Heart left ventricle (tissue), 16 donors: ENCODE measurements at regions of chr15 and their contacts with region 1.

Region 1: DNA sequence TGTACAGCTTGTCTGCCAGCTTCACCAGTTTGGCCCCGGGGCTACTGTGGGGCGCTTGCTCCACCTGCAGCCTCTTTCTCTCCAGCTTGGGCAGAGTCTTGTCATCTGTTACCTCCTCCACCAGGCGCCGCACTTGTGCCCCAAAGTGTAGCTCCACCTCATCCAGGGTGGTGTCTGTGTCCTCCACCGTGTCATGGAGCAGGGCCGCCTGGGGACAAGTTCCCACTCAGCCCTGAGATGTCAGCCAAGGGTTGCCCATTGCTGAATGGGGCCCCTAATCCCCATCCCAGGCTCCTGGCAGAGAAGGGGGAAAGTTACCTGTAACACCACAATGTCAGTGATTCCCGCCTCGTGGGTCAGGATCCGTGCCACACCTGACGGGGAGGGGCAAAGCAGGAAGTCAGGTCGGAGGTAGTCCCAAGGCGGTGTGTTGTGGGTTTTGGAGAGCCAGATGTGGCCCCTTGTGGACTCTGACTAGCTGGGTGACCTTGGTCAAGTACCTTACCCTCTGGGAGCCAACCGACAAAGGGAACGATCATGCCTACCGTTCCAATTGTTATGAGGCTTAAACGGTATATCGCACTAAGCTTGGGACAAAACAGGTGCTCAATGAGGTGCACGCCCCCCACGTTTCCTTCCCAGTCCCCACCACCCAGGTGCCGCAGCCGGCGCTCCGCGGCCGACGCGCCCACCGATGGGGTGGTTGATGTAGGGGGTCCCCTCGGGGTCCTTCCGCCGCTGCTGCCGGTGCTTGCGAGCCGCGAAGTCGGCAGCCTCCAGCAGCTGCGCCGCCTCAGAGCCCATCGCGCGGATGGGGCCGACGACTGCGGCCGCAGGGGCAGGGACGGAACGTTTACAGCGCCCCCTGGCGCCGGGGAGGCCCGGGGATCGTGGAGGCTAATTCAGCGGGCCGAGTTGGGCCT is at the start of gene HDDC3:
- DNase-seq: peak; percentile 90 to 96 (median 93)
- ATAC-seq: peak; percentile 42 to 66 (median 65)
- H3K4me3 ChIP-seq: peak within 1 kb of the TSS; percentile 48 to 95 (median 86)
- H3K27ac ChIP-seq: peak within 1 kb of the TSS; percentile 89 to 97 (median 96)
- H3K4me1 ChIP-seq: peaks cover 11 to 67% (median 47%) of the 10 kb centered on the region in 12 donors
- H3K27me3 ChIP-seq: no peaks in the 10 kb centered on the region
- CTCF ChIP-seq: peak; percentile 94 to 99 (median 97)
- POLR2A ChIP-seq: peak in 1 of 2 donors; percentile 28
- total RNA-seq, gene HDDC3: 10.9 to 19.9 (median 15.2) TPM

Region 2: DNA sequence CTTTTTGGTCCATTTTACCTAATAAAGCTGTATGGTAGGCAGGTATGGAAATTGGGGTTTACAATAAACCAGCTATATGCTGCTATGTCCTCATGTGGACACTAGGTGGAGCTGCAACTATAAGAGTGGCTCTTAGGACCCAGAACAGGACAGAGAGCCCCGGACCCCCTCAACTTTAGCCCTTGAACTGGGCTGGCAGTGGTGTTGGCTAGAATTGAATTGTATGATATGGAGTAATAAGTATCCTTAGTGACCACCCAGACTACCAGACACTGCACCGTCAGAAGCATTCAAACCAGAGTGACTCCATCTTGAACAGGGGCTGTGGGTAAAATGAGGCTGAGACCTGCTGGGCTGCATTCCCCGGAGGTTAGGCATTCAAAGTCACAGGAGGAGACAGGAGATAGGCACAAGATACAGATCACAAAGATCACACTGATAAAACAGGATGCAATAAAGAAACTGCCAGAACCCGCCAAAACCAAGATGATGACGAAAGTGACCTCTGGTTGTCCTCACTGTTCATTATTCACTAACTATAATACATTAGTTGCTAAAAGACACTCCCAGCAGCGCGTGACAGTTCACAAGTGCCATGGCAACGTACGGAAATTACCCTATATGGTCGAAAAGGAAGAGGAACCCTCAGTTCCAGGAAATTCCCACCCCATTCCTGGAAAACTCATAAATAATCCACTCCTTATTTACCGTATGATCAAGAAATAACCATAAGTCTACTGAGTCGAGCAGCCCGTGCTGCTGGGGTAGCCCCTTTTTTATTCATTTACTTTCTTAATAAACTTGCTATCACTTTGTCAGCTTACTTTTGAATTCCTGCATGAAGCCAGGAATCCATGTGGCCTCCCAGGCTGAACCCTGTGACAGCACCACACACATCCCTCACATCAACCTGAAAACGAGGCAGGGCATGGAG is 283.6 kb before region 1 on chr15:
- intact Hi-C with region 1: loop called in 7 of 10 experiments (anchors 1 to 5 kb)
- DNase-seq: peak; percentile 61 to 79 (median 75)
- ATAC-seq: peak; percentile 66 to 89 (median 74)
- H3K4me3 ChIP-seq: peak overlapping the region in 1 of 12 donors; percentile 2
- H3K27ac ChIP-seq: peak overlapping the region; percentile 16 to 80 (median 58)
- H3K4me1 ChIP-seq: peaks cover 0 to 31% (median 15%) of the 10 kb centered on the region in 12 donors
- H3K27me3 ChIP-seq: no peaks in the 10 kb centered on the region
- CTCF ChIP-seq: peak; percentile 80 to 97 (median 93)
- POLR2A ChIP-seq: no peak

Region 3: DNA sequence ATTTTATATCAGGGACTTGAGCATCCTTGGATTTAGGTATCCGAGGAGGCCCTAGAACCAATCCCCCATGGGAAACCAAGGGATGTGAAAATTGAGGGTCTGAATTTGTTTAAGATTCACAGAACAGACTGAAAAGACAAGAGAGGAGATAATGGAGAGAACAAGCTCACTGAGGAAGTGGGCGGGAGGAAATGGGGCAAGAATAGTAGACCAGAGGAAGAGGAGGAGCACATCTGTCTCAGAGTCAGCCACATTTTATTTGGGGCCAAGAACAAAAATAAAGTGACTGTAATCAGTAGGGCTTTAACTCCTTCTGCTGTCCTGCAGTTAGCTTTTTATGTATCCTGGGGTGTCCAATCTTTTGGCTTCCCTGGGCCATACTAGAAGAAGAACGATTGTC is 151.1 kb before region 1 on chr15:
- intact Hi-C with region 1: no loop called
- DNase-seq: no peak
- ATAC-seq: peak in 1 of 4 donors; percentile 51
- H3K4me3 ChIP-seq: no peak overlapping the region
- H3K27ac ChIP-seq: peak overlapping the region in 1 of 12 donors; percentile 51
- H3K4me1 ChIP-seq: peaks cover 0 to 20% (median 0%) of the 10 kb centered on the region in 12 donors
- H3K27me3 ChIP-seq: no peaks in the 10 kb centered on the region
- CTCF ChIP-seq: no peak
- POLR2A ChIP-seq: no peak

Region 4: GRCh38 chr15:90829942-90830440 is 102.0 kb before region 1 on chr15:
- intact Hi-C with region 1: no loop called
- DNase-seq: peak in 2 of 5 donors; percentile 38 to 50
- ATAC-seq: peak; percentile 52 to 83 (median 68)
- H3K4me3 ChIP-seq: peak overlapping the region in 1 of 12 donors; percentile 26
- H3K27ac ChIP-seq: peak overlapping the region in 2 of 12 donors; percentile 18 to 92
- H3K4me1 ChIP-seq: peaks cover 0 to 25% (median 0%) of the 10 kb centered on the region in 12 donors
- H3K27me3 ChIP-seq: no peaks in the 10 kb centered on the region
- CTCF ChIP-seq: no peak
- POLR2A ChIP-seq: no peak

Region 5: DNA sequence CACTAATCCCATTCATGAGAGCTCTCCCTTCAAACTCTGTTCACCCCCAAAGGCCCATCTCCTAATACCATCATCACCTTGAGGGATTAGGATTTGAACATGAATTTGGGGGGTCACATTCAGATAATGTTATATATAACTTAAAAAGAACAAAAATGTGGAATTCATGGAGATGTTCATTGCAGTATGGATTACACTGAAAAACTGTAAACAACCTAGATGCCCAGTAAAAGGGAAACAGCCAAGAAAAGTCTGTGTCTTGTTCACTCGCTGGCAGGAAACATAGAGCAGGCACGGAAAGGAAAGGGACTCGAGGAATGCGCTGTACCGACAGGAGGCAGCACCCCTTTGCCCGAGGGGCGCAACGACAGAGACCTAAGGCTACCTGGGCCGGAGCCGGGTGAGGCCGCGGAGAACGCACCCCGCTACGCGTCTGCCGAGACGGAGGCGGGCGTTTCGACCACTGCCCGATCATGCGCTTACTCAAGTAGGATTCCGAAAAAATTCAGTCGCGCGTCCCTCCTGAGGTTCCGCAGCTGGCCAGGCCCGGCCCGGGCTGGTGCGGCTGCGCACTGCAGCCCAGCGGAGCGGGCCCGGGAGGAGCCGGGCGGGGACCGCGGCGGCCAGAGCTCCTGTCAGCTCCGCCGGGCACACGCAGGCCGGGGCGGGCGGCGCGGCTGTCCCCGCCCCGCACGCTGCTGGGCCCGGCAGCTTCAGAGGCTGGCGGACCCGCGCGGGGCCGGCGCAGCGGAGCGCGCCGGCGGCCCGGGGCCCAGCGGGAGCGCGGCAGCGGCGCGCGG is 29.8 kb before region 1 on chr15:
- intact Hi-C with region 1: loop called in 9 of 10 experiments (anchors 1 to 2 kb)
- DNase-seq: peak; percentile 77 to 89 (median 84)
- ATAC-seq: peak; percentile 68 to 92 (median 88)
- H3K4me3 ChIP-seq: peak overlapping the region; percentile 18 to 95 (median 84)
- H3K27ac ChIP-seq: peak overlapping the region; percentile 65 to 98 (median 94)
- H3K4me1 ChIP-seq: peaks cover 3 to 29% (median 19%) of the 10 kb centered on the region in 12 donors
- H3K27me3 ChIP-seq: no peaks in the 10 kb centered on the region
- CTCF ChIP-seq: peak; percentile 60 to 95 (median 78)
- POLR2A ChIP-seq: peak in 1 of 2 donors; percentile 60

Region 6: GRCh38 chr15:90994417-90995311 is 62.7 kb after region 1 on chr15 and contains the start of gene PRC1:
- intact Hi-C with region 1: loop called in 1 of 10 experiments (anchors 2 kb)
- DNase-seq: peak; percentile 98 to 99 (median 99)
- ATAC-seq: peak; percentile 99 to 100 (median 100)
- H3K4me3 ChIP-seq: peak within 1 kb of the TSS; percentile 58 to 99 (median 86)
- H3K27ac ChIP-seq: peak within 1 kb of the TSS; percentile 54 to 91 (median 82)
- H3K4me1 ChIP-seq: peaks cover 0 to 19% (median 3%) of the 10 kb centered on the region in 12 donors
- H3K27me3 ChIP-seq: no peaks in the 10 kb centered on the region
- CTCF ChIP-seq: no peak
- POLR2A ChIP-seq: peak in 1 of 2 donors; percentile 64
- total RNA-seq, gene PRC1: 3.1 to 25.7 (median 4.7) TPM

Region 7: GRCh38 chr15:91824256-91824655 is 892.3 kb after region 1 on chr15:
- intact Hi-C with region 1: no loop called
- DNase-seq: peak in 4 of 5 donors; percentile 72 to 77 (median 74)
- ATAC-seq: peak; percentile 95 to 98 (median 96)
- H3K4me3 ChIP-seq: no peak overlapping the region
- H3K27ac ChIP-seq: peak overlapping the region in 11 of 12 donors; percentile 44 to 94 (median 76)
- H3K4me1 ChIP-seq: peaks cover 0 to 24% (median 2%) of the 10 kb centered on the region in 12 donors
- H3K27me3 ChIP-seq: no peaks in the 10 kb centered on the region
- CTCF ChIP-seq: no peak
- POLR2A ChIP-seq: no peak